ENCODE measurements at regions of chr5 and their contacts with region 1.

Region 1: GRCh38 chr5:79857714-79858409 is 133.2 kb downstream of the MTX3 start:
- DNase-seq: peak in 1 of 2 experiments; percentile 65
- H3K4me3 ChIP-seq: no peak overlapping the region
- H3K27ac ChIP-seq: no peak overlapping the region
- H3K4me1 ChIP-seq: no peaks in the 10 kb centered on the region
- H3K27me3 ChIP-seq: no peaks in the 10 kb centered on the region
- CTCF ChIP-seq: peak; percentile 96

Region 2: DNA sequence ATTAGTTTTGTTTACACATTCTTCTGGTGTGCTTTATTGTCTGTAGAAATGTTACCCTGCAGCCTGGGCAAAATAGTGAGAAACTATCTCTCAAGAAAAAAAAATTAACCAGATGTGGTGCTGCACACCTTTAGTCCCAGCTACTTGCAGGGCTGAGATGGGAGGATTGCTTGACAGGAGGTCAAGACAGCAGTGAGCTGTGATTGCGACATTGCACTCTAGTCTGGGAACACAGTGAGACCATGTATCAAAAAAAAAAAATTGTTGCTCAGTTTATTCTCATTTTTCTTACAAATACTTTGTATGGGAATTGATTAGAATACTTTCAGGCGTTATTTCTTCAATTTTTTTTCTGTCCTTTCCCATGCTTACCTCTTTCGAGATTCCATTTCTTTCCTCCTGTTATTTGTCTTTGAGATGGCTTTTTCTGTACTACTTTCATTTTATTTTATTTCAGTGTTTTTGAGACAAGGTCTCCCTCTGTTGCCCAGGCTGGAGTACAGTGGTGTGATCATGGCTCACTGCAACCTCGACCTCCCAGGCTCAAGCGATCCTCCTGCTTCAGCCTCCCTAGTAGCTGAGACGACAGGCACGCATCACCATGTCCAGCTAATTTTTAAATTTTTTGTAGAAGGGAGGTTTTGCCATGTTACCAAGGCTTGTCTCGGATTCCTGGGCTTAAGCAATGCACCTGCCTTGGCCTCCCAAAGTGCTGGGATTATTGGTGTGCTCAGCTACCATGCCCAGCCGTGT is 220.7 kb before region 1 on chr5:
- CTCF ChIA-PET with region 1: no interaction called
- POLR2A ChIA-PET with region 1: interaction called, 19 read pairs
- intact Hi-C with region 1: no loop called
- DNase-seq: no peak
- H3K4me3 ChIP-seq: no peak overlapping the region
- H3K27ac ChIP-seq: no peak overlapping the region
- H3K4me1 ChIP-seq: no peaks in the 10 kb centered on the region
- H3K27me3 ChIP-seq: no peaks in the 10 kb centered on the region
- CTCF ChIP-seq: no peak

Region 3: GRCh38 chr5:79702606-79703382 is 155.1 kb before region 1 on chr5:
- CTCF ChIA-PET with region 1: no interaction called
- POLR2A ChIA-PET with region 1: no interaction called
- intact Hi-C with region 1: loop called (anchors 5 kb)
- DNase-seq: peak in 1 of 2 experiments; percentile 65
- H3K4me3 ChIP-seq: no peak overlapping the region
- H3K27ac ChIP-seq: peak overlapping the region; percentile 36
- H3K4me1 ChIP-seq: peaks cover 56% of the 10 kb centered on the region
- H3K27me3 ChIP-seq: no peaks in the 10 kb centered on the region
- CTCF ChIP-seq: peak; percentile 65

Measured in PC-9 (cell line).